HEK293 (cell line): ENCODE measurements at regions of chr7 and their contacts with region 1.

Region 1: DNA sequence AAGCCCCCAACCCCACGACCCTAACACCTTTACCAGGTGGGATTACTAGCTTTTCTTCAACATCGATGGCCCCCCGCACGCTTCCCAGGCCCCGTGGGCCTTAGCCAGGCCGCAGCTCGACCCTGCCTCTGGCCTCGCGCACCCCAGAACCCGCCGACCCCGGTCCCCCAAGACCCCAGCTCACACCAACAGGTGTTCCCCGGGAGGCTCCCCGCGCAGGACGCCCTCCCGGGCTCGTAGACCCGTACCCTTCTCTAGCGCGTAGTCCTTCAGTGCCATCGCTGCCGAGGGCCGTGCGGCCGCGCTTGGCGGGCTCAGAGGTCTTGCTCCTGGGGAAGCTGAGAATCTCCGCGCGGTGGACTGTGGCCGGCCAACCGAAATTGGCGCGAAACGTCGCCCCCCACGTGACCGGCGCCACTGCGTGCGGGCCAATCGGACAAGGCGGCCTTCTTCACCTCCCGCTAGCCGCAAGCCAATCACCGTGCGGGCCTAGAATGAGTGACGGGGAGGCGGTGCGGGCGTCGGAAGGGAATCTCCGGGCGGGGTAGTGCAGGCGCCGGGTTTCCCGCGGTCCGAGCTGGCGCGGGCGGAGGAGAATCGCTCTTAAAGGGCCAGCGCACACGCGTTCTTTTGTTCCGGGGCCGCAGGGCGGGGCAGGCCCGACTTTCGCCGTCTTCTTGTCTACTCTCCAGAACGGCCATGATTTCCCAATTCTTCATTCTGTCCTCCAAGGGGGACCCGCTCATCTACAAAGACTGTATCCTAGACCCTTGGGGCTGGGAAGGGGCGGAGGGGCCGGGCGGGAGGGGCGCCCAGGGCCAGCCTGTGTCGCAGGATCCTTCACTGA is at the starts of genes AP4M1 and MCM7:
- H3K4me3 ChIP-seq: peak within 1 kb of the TSS; percentile 95
- H3K27ac ChIP-seq: peak within 1 kb of the TSS; percentile 99
- H3K4me1 ChIP-seq: no peaks in the 10 kb centered on the region
- CTCF ChIP-seq: 0 out of 2 replicates have a peak, but pooled peaks have one; percentile 5

Region 2: DNA sequence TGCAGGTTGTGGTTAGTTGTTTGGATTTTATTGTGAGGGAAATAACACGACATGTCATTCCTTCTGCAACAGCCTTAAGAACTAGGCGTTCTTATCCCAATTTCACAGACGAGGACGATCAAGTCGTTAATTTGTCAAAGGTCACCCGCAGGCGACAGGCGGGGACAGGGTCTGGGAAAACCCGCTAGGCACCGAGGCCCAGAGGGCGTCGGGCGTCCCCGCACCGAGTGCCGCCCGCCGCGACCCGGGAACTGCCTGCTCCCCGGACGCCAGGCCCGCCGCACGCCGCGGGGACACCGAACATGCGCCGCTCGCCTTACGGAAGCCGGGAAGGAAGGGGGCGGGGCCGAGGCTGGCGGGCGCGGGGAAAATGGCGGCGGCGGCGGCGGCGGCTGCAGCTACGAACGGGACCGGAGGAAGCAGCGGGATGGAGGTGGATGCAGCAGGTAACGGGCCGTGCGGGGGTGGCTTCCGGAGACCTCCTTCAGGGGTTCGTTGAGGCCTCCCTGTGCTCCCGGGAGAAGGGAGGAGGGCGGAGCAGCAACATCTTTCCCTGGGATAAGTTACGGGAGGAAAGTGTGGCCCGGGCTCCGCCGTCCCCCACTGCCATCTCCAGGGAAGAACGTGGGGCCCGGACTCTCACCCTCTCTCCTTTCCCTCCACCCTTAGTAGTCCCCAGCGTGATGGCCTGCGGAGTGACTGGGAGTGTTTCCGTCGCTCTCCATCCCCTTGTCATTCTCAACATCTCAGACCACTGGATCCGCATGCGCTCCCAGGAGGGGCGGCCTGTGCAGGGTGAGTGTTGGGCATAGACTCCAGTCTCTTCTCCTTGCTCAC is 12.4 kb before region 1 on chr7 and contains the start of gene COPS6:
- CTCF ChIA-PET with region 1: interaction called, 3 read pairs
- POLR2A ChIA-PET with region 1: interaction called, 115 read pairs
- H3K4me3 ChIP-seq: peak within 1 kb of the TSS; percentile 86
- H3K27ac ChIP-seq: peak within 1 kb of the TSS; percentile 79
- H3K4me1 ChIP-seq: peaks cover 8% of the 10 kb centered on the region
- CTCF ChIP-seq: no peak

Region 3: GRCh38 chr7:100119062-100119700 is 17.9 kb after region 1 on chr7 and contains the starts of genes CNPY4 and TAF6:
- CTCF ChIA-PET with region 1: interaction called, 3 read pairs
- POLR2A ChIA-PET with region 1: interaction called, 81 read pairs
- H3K4me3 ChIP-seq: peak within 1 kb of the TSS; percentile 90
- H3K27ac ChIP-seq: peak within 1 kb of the TSS; percentile 87
- H3K4me1 ChIP-seq: peaks cover 3% of the 10 kb centered on the region; the same call in 1 of the 2 replicates
- CTCF ChIP-seq: no peak; the same call in 1 of the 2 replicates

Region 4: GRCh38 chr7:100132697-100133151 is 31.5 kb after region 1 on chr7:
- CTCF ChIA-PET with region 1: interaction called, 10 read pairs
- POLR2A ChIA-PET with region 1: interaction called, 31 read pairs
- H3K4me3 ChIP-seq: no peak overlapping the region
- H3K27ac ChIP-seq: no peak overlapping the region
- H3K4me1 ChIP-seq: no peaks in the 10 kb centered on the region
- CTCF ChIP-seq: peak; percentile 94

Region 5: GRCh38 chr7:100428199-100428966 is 327.1 kb after region 1 on chr7 and contains the start of gene ZCWPW1:
- CTCF ChIA-PET with region 1: no interaction called
- POLR2A ChIA-PET with region 1: interaction called, 13 read pairs
- H3K4me3 ChIP-seq: peak within 1 kb of the TSS; percentile 83
- H3K27ac ChIP-seq: peak within 1 kb of the TSS; percentile 97
- H3K4me1 ChIP-seq: peaks cover 4% of the 10 kb centered on the region
- CTCF ChIP-seq: peak; percentile 28; the same call in 1 of the 2 replicates

Region 6: GRCh38 chr7:101953248-101953819 is 1852.1 kb after region 1 on chr7:
- CTCF ChIA-PET with region 1: no interaction called
- POLR2A ChIA-PET with region 1: interaction called, 11 read pairs
- H3K4me3 ChIP-seq: no peak overlapping the region
- H3K27ac ChIP-seq: no peak overlapping the region
- H3K4me1 ChIP-seq: 0 out of 2 replicates have a peak, but pooled peaks cover 2% of the 10 kb centered on the region
- CTCF ChIP-seq: no peak